Sciatic nerve (tissue), 2 donors: ENCODE measurements at regions of chr7 and their contacts with region 1.

Region 1: DNA sequence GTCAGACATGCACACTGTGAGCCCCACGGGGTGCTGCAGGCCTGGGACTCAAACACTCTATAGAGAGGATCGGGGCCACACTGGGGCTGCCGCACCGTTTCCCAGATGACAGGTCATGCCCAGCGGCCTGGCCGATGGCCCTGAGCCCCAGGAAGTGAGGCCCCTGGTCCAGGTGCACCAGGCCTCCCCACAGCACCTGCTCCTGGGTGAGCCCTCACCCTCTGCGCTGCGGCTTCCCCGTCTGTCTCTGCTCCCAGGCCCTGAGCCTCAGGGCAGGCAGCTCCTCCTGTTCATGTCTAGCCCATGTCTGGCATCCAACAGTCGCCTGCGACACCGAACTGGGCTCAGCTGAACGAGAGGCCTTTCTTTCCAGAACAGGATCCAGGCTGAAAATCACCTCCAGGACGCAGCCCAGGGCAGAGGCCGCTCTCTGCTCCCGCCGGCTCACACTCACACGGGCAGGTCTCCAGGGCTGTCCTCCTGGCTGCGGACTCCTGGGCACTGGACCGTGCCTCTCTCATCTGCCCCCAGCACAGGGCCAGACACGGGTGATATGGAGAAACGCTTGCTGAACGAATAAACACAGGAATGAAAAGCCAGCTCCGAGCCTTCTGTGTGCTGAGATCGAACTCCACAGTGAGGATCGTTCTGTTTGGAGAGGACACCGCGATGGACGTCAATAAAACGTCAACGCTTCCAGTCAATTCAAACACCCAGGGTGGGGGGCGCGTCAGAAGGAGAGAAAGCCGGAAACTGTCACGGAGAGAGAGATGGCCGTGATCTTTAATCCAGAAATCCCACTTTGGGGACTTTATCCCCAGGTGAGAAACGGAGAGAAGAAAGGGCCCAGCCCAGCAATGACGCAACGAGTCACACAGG is 202.4 kb downstream of the ELFN1 start:
- DNase-seq: no peak
- ATAC-seq: no peak

Region 2: DNA sequence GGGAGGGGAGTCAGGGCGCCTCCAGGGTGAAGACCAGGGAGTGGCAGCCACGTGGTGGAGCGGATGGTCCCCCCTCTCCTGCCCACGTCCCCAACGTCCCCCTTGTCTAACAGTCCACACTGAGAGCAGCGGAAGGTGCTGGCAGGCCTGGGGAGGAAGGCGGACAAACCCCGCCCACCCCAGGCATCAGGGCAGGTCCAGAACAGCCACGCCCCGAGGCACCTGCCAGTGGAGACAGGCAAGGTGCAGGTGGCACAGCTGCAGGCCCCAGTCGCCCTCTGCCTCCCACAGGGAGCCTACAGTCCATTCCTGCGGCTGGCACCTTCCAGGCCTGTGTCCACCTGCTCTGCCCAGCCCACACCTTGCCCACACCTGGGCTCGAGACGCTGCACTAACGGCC is 864.5 kb before region 1 on chr7:
- intact Hi-C with region 1: loop called (anchors 5 kb)
- DNase-seq: no peak
- ATAC-seq: no peak